Ovary (tissue), 10 donors: ENCODE measurements at regions of chr1 and their contacts with region 1.

Region 1: DNA sequence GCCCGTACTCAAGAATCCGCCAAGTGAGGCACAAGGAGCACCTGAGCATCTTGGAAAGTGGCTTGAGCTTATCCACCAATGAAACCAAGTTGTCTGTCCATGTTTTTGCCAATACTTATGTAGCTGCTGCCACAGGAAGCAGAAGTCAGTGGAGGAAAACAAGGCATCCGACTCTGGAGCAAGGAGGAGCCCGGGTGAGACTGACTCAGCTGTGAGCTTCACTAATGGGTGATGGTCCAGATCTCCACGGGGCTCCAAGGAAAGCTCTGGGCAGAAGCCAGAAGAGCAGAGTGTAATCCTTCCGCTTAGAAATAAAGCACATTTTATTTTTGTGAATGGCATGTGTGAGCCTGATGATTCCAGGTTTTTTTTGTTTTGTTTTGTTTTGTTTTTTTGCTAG is 12.3 kb upstream of the SSR2 start:
- DNase-seq: no peak
- H3K4me3 ChIP-seq: no peak overlapping the region
- H3K27ac ChIP-seq: no peak overlapping the region
- H3K4me1 ChIP-seq: no peaks in the 10 kb centered on the region
- H3K27me3 ChIP-seq: no peaks in the 10 kb centered on the region
- CTCF ChIP-seq: no peak
- EP300 ChIP-seq: no peak
- POLR2A ChIP-seq: no peak

Region 2: DNA sequence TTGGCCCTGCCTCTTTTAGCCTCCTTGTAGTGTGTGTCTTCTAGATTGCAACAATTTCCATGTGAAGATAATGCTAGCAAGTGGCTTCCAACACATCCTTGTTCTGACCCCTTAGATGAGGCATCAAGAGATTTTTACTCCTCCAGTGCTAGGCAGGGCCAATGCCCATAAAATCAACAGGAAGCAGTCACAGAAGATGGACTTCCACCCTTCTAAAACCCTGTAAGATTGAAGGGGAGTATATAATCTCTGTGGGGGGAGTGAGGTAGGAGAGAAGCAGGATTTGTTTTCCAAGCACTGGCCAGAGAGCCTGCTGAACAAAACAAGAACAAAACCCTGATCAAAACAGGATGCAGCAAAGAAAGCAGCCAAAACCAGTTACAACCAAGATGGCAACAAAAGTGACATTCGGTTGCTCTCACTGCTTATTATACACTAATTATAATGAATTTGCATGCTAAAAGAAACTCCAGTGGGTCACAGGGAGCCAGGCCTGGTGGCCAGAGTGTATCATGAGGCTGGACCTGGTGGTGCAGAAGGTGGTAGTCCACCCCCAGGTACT is 188.1 kb before region 1 on chr1:
- intact Hi-C with region 1: no loop called
- DNase-seq: no peak
- H3K4me3 ChIP-seq: no peak overlapping the region
- H3K27ac ChIP-seq: no peak overlapping the region
- H3K4me1 ChIP-seq: no peaks in the 10 kb centered on the region
- H3K27me3 ChIP-seq: no peaks in the 10 kb centered on the region
- CTCF ChIP-seq: no peak
- EP300 ChIP-seq: no peak
- POLR2A ChIP-seq: no peak

Region 3: GRCh38 chr1:155934097-155934935 is 98.7 kb before region 1 on chr1 and contains the start of gene KHDC4:
- intact Hi-C with region 1: no loop called
- DNase-seq: peak; percentile 94 to 96 (median 94)
- H3K4me3 ChIP-seq: peak within 1 kb of the TSS; percentile 88
- H3K27ac ChIP-seq: peak within 1 kb of the TSS; percentile 75 to 90
- H3K4me1 ChIP-seq: peaks cover 10% of the 10 kb centered on the region
- H3K27me3 ChIP-seq: no peaks in the 10 kb centered on the region
- CTCF ChIP-seq: peak in 2 of 3 donors; percentile 13 to 29
- EP300 ChIP-seq: peak; percentile 49
- POLR2A ChIP-seq: peak; percentile 100
- total RNA-seq, gene KHDC4: 38.1 to 61.1 (median 46.4) TPM

Region 4: GRCh38 chr1:156001682-156002171 is 31.3 kb before region 1 on chr1:
- intact Hi-C with region 1: loop called in 1 of 4 experiments (anchors 2 kb)
- DNase-seq: no peak
- H3K4me3 ChIP-seq: no peak overlapping the region
- H3K27ac ChIP-seq: no peak overlapping the region
- H3K4me1 ChIP-seq: no peaks in the 10 kb centered on the region
- H3K27me3 ChIP-seq: no peaks in the 10 kb centered on the region
- CTCF ChIP-seq: no peak
- EP300 ChIP-seq: no peak
- POLR2A ChIP-seq: no peak